OCI-LY7 (cell line): ENCODE measurements at regions of chr6 and their contacts with region 1.

Region 1: DNA sequence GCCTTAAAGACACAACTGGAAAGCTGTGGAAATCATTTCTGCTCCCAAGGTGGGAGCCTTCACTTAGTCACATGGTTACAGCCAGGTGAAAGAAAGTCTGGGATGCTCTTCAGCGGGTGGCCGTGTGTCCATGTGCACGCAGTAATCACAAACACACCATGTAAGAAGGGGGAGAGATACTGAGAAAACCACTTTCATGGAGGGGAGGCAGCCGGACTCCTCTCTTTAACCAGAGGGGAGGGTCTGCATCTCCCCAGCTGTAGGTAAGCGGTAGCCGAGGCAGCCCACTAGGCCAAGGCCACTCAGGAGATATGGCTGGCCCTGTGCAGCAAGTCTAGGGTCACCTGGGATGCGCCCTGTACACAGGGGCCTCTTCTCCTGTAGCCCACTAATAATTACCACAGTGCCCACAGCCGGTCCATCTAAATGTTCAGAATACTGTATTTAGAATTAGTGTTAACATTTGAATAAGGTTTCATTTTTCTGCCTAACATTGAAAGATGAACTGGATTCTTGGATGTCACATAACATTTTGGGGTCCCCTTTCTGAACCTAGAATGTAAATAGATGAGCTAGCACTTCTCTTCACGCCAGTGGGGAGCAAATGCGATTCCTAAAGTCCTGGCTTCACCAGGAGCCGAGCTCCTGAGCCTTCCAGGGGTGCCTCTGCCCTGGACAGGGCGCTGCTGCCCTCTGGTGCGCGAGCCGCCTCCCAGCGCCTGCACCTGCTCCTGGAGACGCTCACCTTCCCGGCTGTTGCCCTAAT is 15.9 kb downstream of the GPR31 start:
- DNase-seq: peak; percentile 75
- H3K4me3 ChIP-seq: no peak overlapping the region
- H3K27ac ChIP-seq: no peak overlapping the region
- H3K4me1 ChIP-seq: peaks cover 28% of the 10 kb centered on the region
- CTCF ChIP-seq: peak; percentile 99

Region 2: GRCh38 chr6:166775180-166776081 is 366.4 kb before region 1 on chr6:
- CTCF ChIA-PET with region 1: interaction called, 3 read pairs
- POLR2A ChIA-PET with region 1: interaction called, 3 read pairs
- intact Hi-C with region 1: loop called (anchors 1 kb)
- DNase-seq: peak; percentile 83
- H3K4me3 ChIP-seq: no peak overlapping the region
- H3K27ac ChIP-seq: no peak overlapping the region
- H3K4me1 ChIP-seq: no peaks in the 10 kb centered on the region
- CTCF ChIP-seq: peak; percentile 91

Region 3: GRCh38 chr6:166950443-166950821 is 191.4 kb before region 1 on chr6:
- CTCF ChIA-PET with region 1: interaction called, 8 read pairs
- POLR2A ChIA-PET with region 1: interaction called, 3 read pairs
- intact Hi-C with region 1: loop called (anchors 2 kb)
- DNase-seq: peak; percentile 66
- H3K4me3 ChIP-seq: peak overlapping the region; percentile 64
- H3K27ac ChIP-seq: peak overlapping the region; percentile 87
- H3K4me1 ChIP-seq: peaks cover 60% of the 10 kb centered on the region
- CTCF ChIP-seq: no peak

Region 4: DNA sequence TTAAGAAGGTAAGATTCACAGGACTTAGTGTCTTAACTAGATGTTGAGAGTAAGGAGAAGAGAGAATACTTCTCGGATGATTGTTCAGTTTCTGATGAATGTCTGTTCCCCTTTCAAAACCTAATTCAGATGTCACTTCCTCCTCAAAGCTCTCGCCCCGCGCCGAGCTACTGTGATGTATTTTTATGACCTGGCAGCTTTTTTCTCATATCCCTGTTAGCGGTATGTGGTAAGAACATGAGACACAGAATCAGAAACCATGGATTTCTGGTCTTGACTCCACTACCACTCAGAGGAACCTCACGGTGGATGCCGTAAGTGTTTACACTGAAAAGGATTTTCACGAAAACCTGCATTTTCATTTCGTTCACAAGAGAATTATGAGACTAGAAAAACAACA is 94.3 kb before region 1 on chr6:
- CTCF ChIA-PET with region 1: interaction called, 3 read pairs
- POLR2A ChIA-PET with region 1: interaction called, 4 read pairs
- intact Hi-C with region 1: loop called (anchors 2 kb)
- DNase-seq: peak; percentile 88
- H3K4me3 ChIP-seq: peak overlapping the region; percentile 60
- H3K27ac ChIP-seq: peak overlapping the region; percentile 94
- H3K4me1 ChIP-seq: peaks cover 74% of the 10 kb centered on the region
- CTCF ChIP-seq: no peak

Region 5: GRCh38 chr6:167119670-167120381 is 22.0 kb before region 1 on chr6:
- CTCF ChIA-PET with region 1: interaction called, 6 read pairs
- POLR2A ChIA-PET with region 1: interaction called, 34 read pairs
- intact Hi-C with region 1: loop called (anchors 2 kb)
- DNase-seq: peak; percentile 69
- H3K4me3 ChIP-seq: no peak overlapping the region
- H3K27ac ChIP-seq: peak overlapping the region; percentile 7
- H3K4me1 ChIP-seq: peaks cover 89% of the 10 kb centered on the region
- CTCF ChIP-seq: peak; percentile 80

Region 6: GRCh38 chr6:167550941-167551627 is 409.2 kb after region 1 on chr6:
- CTCF ChIA-PET with region 1: no interaction called
- POLR2A ChIA-PET with region 1: no interaction called
- intact Hi-C with region 1: no loop called
- DNase-seq: no peak
- H3K4me3 ChIP-seq: no peak overlapping the region
- H3K27ac ChIP-seq: no peak overlapping the region
- H3K4me1 ChIP-seq: no peaks in the 10 kb centered on the region
- CTCF ChIP-seq: no peak